BJ (cell line): ENCODE measurements at regions of chr3 and their contacts with region 1.

Region 1: GRCh38 chr3:50260027-50260941 is 8.7 kb upstream of the SEMA3B start:
- DNase-seq: no peak
- H3K4me3 ChIP-seq: peak overlapping the region; percentile 51
- H3K27me3 ChIP-seq: no peaks in the 10 kb centered on the region
- CTCF ChIP-seq: peak; percentile 67

Region 2: DNA sequence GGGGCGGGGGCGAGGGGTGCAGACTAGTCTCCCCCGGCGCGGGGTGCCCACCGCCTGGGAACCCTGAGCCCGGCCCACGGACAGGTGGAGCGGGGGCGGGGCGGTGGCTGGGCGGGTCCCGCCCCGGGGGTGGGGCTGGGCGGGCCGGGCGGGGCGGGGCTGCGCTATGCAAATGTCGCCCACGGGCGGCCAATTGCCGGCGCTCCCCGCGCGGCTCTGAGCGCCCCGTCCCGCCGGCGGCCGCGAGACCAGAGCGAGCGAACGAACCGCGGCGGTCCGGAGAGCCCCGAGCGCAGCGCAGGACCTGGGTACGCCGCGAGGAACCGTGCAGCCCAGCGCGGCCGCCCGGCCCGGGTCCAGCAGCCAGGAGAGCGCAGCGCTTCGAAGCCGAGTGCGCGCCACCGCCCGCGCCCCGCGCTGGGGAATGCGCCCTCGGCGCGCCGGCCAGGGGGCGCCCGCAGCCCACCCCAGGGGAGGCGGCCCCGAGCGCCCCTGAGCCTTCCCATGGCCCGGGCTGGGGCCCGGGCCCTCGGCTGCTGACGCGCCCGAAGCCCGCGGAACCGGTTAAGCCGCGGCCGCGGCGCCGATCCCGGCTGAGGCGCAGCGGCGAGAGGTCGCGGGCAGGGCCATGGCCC is 105.3 kb before region 1 on chr3 and contains the start of gene SEMA3F:
- CTCF ChIA-PET with region 1: no interaction called
- POLR2A ChIA-PET with region 1: no interaction called
- DNase-seq: no peak
- H3K4me3 ChIP-seq: peak within 1 kb of the TSS; percentile 43
- H3K27me3 ChIP-seq: peaks cover 4% of the 10 kb centered on the region; the same call in 1 of the 2 replicates
- CTCF ChIP-seq: no peak
- polyA plus RNA-seq, gene SEMA3F: 7.4 and 11.4 TPM in 2 replicates

Region 3: GRCh38 chr3:50235716-50236496 is 24.4 kb before region 1 on chr3 and contains the start of gene GNAI2:
- CTCF ChIA-PET with region 1: interaction called, 114 read pairs
- POLR2A ChIA-PET with region 1: interaction called, 15 read pairs
- DNase-seq: peak; percentile 93
- H3K4me3 ChIP-seq: peak within 1 kb of the TSS; percentile 76
- H3K27me3 ChIP-seq: no peaks in the 10 kb centered on the region
- CTCF ChIP-seq: no peak
- polyA plus RNA-seq, gene GNAI2: 574 and 887 TPM in 2 replicates

Region 4: DNA sequence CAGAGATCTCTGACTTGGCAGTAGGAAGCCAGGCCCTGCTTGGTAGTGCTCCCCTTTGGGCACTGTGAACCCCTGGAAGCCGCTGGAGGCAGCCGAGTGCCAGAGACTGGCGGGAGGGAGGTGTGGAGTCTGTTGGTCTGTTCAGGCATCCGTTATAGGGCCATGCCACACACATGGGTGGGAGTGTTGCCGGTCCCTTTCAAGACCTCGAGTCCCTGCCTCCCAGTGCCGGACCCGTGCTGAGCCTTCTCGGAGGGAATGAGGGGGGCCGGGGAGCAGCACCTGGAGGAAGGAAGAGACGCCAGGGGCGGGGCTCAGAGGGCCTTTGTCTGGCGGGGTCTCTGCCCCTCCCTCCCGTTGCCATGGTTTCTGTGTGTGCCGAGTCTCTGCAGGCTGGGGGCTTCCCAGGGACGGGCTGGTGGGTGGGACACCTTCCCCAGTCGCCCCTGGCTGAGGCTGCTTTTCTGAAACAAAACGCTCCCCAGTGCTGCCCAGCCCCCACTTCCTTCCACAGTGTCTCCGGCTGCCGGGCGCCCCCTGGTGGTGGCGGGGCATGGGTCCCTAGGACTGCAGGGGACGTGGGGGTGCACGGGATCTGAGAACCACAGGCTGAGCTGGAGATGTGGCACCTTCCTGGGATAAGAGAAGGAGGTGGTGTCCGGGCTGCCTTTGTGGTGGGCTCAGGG is 14.3 kb before region 1 on chr3:
- CTCF ChIA-PET with region 1: interaction called, 51 read pairs
- POLR2A ChIA-PET with region 1: interaction called, 5 read pairs
- DNase-seq: no peak
- H3K4me3 ChIP-seq: peak overlapping the region; percentile 34
- H3K27me3 ChIP-seq: no peaks in the 10 kb centered on the region
- CTCF ChIP-seq: peak; percentile 100

Region 5: DNA sequence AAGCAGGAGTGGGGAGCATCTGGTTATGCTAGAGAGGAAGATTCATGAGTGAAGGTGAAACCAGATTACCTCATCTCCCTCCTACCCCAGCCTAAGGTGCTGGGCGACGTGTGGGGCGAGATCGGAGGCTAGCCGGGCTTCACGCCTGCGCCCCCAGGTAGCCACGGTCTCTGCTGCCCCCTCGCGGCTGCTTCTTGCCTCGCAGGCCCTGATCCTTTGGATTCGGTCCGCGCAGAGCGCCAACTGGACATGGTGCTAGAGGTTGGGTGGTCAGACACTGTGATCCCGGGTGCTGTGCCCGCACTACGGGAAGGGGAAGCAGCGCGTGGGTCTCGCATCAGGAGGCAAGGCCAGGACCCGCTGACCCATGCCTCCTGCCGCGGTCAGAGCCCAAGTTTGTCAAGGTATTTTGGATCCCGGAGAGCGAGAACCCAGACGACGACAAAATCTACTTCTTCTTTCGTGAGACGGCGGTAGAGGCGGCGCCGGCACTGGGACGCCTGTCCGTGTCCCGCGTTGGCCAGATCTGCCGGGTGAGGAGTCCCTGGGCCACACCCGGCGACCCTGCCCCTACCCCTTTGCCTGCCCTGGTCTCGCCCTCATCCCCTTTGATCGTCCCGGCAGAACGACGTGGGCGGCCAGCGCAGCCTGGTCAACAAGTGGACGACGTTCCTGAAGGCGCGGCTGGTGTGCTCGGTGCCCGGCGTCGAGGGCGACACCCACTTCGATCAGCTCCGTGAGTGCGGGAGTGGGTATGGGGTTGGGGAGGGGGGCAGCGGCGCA is 12.8 kb after region 1 on chr3:
- CTCF ChIA-PET with region 1: interaction called, 58 read pairs
- POLR2A ChIA-PET with region 1: no interaction called
- DNase-seq: no peak
- H3K4me3 ChIP-seq: no peak overlapping the region
- H3K27me3 ChIP-seq: no peaks in the 10 kb centered on the region
- CTCF ChIP-seq: peak; percentile 97

Region 6: GRCh38 chr3:50327943-50328691 is 67.8 kb after region 1 on chr3 and contains the start of gene TUSC2:
- CTCF ChIA-PET with region 1: interaction called, 17 read pairs
- POLR2A ChIA-PET with region 1: no interaction called
- DNase-seq: peak; percentile 74
- H3K4me3 ChIP-seq: peak within 1 kb of the TSS; percentile 72
- H3K27me3 ChIP-seq: no peaks in the 10 kb centered on the region
- CTCF ChIP-seq: no peak
- polyA plus RNA-seq, gene TUSC2: 33.8 and 38.9 TPM in 2 replicates